ENCODE measurements at regions of chr2 and their contacts with region 1.

Region 1: DNA sequence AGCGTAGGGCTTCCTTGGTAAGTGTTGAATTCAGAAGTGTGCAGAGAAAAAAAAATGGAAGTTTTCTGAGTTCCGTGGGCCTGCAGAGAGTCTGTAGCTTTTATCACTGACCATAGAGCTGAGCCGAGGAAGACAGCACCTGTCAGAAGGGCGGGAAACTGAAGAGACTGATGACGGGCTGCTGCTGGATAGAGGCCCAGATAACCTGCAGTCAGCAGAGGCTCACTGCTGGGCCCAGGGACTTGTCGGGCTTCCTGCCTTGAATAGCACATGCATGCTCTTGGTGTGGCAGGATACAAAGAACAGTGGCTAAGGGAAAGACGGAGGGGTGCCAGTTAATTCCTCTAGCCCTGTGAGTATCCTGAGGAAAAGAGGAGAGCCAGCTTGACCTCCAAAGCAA is 166.4 kb downstream of the MGAT5 start:
- DNase-seq: no peak
- H3K4me3 Mint-ChIP-seq: no peak overlapping the region
- H3K27ac Mint-ChIP-seq: no peak overlapping the region
- H3K4me1 Mint-ChIP-seq: no peaks in the 10 kb centered on the region
- H3K27me3 Mint-ChIP-seq: no peaks in the 10 kb centered on the region
- CTCF ChIP-seq: no peak

Region 2: GRCh38 chr2:134431838-134432434 is 11.7 kb after region 1 on chr2:
- CTCF ChIA-PET with region 1: interaction called, 14 read pairs
- POLR2A ChIA-PET with region 1: no interaction called
- intact Hi-C with region 1: no loop called
- DNase-seq: no peak
- H3K4me3 Mint-ChIP-seq: no peak overlapping the region
- H3K27ac Mint-ChIP-seq: peak overlapping the region; percentile 36
- H3K4me1 Mint-ChIP-seq: peaks cover 22% of the 10 kb centered on the region
- H3K27me3 Mint-ChIP-seq: no peaks in the 10 kb centered on the region
- CTCF ChIP-seq: no peak

Region 3: DNA sequence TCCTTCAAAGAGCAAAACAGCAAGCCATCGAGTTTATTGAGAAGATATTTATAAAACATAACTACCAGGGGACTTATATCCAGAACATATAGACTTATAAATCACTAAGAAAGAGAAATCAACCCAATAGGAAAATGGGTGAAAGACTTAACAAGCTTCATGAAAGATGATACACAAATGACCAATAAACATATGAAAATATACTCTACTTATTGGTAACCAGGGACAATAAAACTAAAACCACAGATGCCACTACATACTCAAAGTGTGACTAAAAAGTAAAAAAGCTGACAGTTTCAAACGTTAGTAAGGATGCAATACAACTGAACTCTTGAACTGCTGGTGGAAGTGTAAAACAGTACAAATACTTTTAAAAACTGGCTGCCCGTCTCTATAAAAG is 144.3 kb after region 1 on chr2:
- CTCF ChIA-PET with region 1: no interaction called
- POLR2A ChIA-PET with region 1: no interaction called
- intact Hi-C with region 1: no loop called
- DNase-seq: no peak
- H3K4me3 Mint-ChIP-seq: no peak overlapping the region
- H3K27ac Mint-ChIP-seq: no peak overlapping the region
- H3K4me1 Mint-ChIP-seq: no peaks in the 10 kb centered on the region
- H3K27me3 Mint-ChIP-seq: peaks cover 6% of the 10 kb centered on the region
- CTCF ChIP-seq: no peak